ENCODE measurements at regions of chr14 and their contacts with region 1.

Region 1: GRCh38 chr14:96362965-96363756 is at the starts of genes ATG2B and GSKIP:
- DNase-seq: peak; percentile 86 to 98 (median 96)

Region 2: GRCh38 chr14:95564060-95564459 is 799.1 kb before region 1 on chr14:
- intact Hi-C with region 1: no loop called
- DNase-seq: peak in 1 of 42 donors; percentile 15

Region 3: GRCh38 chr14:96391293-96392118 is 28.3 kb after region 1 on chr14:
- intact Hi-C with region 1: loop called (anchors 2 kb)
- DNase-seq: peak; percentile 91 to 100 (median 99)

Region 4: GRCh38 chr14:96501742-96502617 is 138.8 kb after region 1 on chr14 and contains the start of gene PAPOLA:
- intact Hi-C with region 1: loop called (anchors 10 kb)
- DNase-seq: peak; percentile 87 to 98 (median 94)